Pancreas (tissue), 10 donors: ENCODE measurements at regions of chr17 and their contacts with region 1.

Region 1: GRCh38 chr17:28252436-28252835 is 66.6 kb upstream of the TMEM97 start:
- DNase-seq: no peak
- ATAC-seq: no peak
- H3K4me3 ChIP-seq: no peak overlapping the region
- H3K27ac ChIP-seq: no peak overlapping the region
- H3K4me1 ChIP-seq: peaks cover 0 to 5% (median 0%) of the 10 kb centered on the region in 3 donors
- H3K27me3 ChIP-seq: no peaks in the 10 kb centered on the region
- CTCF ChIP-seq: no peak

Region 2: GRCh38 chr17:27805520-27806146 is 446.8 kb before region 1 on chr17:
- intact Hi-C with region 1: loop called in 1 of 3 experiments (anchors 10 kb)
- DNase-seq: peak; percentile 80 to 91 (median 82)
- ATAC-seq: peak; percentile 93 to 98 (median 98)
- H3K4me3 ChIP-seq: peak overlapping the region in 2 of 4 donors; percentile 27 to 32
- H3K27ac ChIP-seq: peak overlapping the region; percentile 10 to 73 (median 49)
- H3K4me1 ChIP-seq: peaks cover 0 to 6% (median 0%) of the 10 kb centered on the region in 3 donors
- H3K27me3 ChIP-seq: no peaks in the 10 kb centered on the region
- CTCF ChIP-seq: peak; percentile 73 to 86 (median 84)

Region 3: DNA sequence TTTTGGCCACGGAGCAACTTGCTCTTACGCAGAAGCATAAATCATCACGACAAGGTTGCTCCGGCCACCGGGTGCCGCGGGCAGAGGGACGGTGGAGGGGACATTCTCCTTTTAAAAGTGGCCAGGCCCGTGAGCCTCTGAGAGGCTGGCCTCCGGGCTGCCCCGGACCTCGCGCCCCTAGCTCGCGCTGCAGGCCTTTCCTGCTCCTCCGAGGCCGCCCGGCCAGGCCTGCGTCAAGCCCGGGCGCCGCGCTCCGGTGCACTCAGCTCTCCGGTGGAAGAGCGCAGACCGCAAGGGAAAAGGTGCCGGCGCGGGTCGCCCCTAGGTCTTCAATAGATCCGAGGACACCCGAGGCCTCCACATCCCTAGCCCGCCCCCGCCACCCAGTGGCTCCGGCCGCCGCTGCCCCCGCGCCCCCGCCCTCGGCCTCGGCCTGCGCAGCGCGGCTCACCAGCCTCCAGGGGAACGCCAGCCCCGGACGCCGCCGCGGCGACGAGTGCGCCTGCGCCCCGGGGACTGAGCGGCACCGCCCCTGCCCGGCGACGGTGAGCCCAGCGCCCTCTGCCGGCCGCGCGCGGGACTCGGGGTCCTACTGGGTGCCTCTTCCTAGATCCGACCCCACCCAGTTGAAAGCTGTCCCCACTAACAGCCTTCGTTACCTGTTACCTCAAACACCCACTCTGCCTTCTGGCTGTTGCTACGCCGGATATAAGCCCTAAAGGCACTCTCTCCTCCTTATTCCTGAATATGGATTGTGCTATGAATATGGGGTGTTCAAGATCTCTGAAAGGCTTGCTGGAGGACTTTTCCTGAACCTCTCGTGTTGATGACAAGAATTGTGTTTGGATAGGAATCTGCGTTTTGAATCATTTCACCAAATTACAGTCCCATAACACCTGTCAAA is 359.3 kb before region 1 on chr17 and contains the start of gene LYRM9:
- intact Hi-C with region 1: loop called in 2 of 3 experiments (anchors 10 kb)
- DNase-seq: peak; percentile 86 to 100 (median 94)
- ATAC-seq: peak; percentile 92 to 98 (median 98)
- H3K4me3 ChIP-seq: peak within 1 kb of the TSS; percentile 56 to 80 (median 62)
- H3K27ac ChIP-seq: peak within 1 kb of the TSS; percentile 76 to 90 (median 82)
- H3K4me1 ChIP-seq: peaks cover 10 to 22% (median 15%) of the 10 kb centered on the region in 3 donors
- H3K27me3 ChIP-seq: no peaks in the 10 kb centered on the region
- CTCF ChIP-seq: peak; percentile 83 to 94 (median 89)
- total RNA-seq, gene LYRM9: 4.8 to 11.1 (median 8.4) TPM